ENCODE measurements at regions of chr10 and their contacts with region 1.

Region 1: DNA sequence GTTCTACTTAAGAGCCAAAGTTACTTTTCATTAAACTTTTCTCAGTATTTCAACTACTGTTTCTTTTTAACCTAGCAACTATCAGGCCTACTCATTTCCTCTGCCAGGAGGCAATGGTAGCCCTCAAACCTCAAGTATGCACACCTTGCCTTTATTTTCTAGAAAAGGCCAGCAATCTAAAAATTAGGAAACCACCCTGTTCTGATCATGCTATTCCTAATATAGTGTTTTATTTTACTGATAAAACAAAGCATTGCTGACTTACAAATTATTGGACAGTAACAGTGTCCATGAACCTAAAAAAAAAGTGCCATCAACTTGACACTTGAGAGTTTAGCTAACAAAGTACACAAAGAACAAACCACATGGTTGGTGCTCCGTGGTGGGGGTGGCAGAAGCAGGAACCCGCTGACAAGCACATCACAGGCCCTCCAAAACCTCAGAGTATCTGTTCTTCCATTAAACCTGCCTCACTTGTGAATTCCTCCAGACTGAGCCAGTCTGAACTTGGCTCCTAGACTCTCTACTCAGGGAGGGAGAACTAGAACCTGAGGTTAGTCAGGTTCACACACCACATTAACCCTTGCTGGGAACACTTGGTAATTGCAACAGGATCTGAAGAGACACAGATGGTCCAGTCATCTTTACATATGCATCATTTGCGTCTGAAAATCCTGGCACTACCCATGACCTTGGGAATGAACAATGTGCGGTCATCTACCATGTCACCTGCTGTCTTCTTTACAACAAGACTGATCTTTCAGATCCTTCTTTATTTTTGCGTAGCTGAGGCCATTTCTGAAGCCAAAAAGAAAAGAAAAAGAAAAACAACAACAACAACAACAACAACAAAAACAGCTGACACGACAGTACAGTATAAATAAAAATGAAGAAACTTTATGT is 31.9 kb downstream of the PIP4K2A start:
- DNase-seq: peak; percentile 78
- ATAC-seq: peak; percentile 50
- H3K4me3 Mint-ChIP-seq: peak overlapping the region; percentile 70
- H3K27ac Mint-ChIP-seq: peak overlapping the region; percentile 97
- H3K4me1 Mint-ChIP-seq: peaks cover 88% of the 10 kb centered on the region
- H3K27me3 Mint-ChIP-seq: no peaks in the 10 kb centered on the region

Region 2: DNA sequence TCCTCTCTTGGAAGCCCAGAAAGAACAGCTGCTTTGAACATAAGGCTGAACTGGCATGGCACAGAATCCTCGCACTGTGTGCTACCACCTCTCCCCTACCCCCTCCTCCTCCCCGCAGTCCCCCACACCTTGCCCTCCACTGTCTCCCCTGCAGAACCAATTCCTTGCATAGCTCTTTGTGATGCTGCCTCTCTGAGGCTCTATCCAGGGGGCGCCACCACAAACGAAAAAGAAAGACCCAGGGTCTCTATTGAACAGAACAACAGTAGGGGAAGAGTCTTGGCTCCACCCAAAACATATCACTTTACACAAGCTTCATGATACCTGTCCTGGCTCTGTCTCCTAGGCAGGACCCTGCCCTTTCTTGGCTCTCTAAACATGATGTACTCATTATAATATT is 438.5 kb before region 1 on chr10:
- CTCF ChIA-PET with region 1: no interaction called
- POLR2A ChIA-PET with region 1: no interaction called
- intact Hi-C with region 1: loop called in 1 of 2 experiments (anchors 1 kb)
- DNase-seq: peak; percentile 27
- ATAC-seq: no peak
- H3K4me3 Mint-ChIP-seq: no peak overlapping the region
- H3K27ac Mint-ChIP-seq: no peak overlapping the region
- H3K4me1 Mint-ChIP-seq: peaks cover 43% of the 10 kb centered on the region
- H3K27me3 Mint-ChIP-seq: peaks cover 3% of the 10 kb centered on the region

Region 3: GRCh38 chr10:22573820-22574569 is 108.5 kb before region 1 on chr10:
- CTCF ChIA-PET with region 1: no interaction called
- POLR2A ChIA-PET with region 1: no interaction called
- intact Hi-C with region 1: loop called in 1 of 2 experiments (anchors 1 kb)
- DNase-seq: peak; percentile 37
- ATAC-seq: no peak
- H3K4me3 Mint-ChIP-seq: no peak overlapping the region
- H3K27ac Mint-ChIP-seq: no peak overlapping the region
- H3K4me1 Mint-ChIP-seq: peaks cover 46% of the 10 kb centered on the region
- H3K27me3 Mint-ChIP-seq: no peaks in the 10 kb centered on the region

Region 4: GRCh38 chr10:22637491-22637890 is 45.0 kb before region 1 on chr10:
- CTCF ChIA-PET with region 1: no interaction called
- POLR2A ChIA-PET with region 1: no interaction called
- intact Hi-C with region 1: no loop called
- DNase-seq: no peak
- ATAC-seq: no peak
- H3K4me3 Mint-ChIP-seq: no peak overlapping the region
- H3K27ac Mint-ChIP-seq: peak overlapping the region; percentile 56
- H3K4me1 Mint-ChIP-seq: peaks cover 77% of the 10 kb centered on the region
- H3K27me3 Mint-ChIP-seq: no peaks in the 10 kb centered on the region

Region 5: GRCh38 chr10:22648547-22648961 is 33.9 kb before region 1 on chr10:
- CTCF ChIA-PET with region 1: no interaction called
- POLR2A ChIA-PET with region 1: interaction called, 4 read pairs
- intact Hi-C with region 1: loop called in 1 of 2 experiments (anchors 1 kb)
- DNase-seq: no peak
- ATAC-seq: peak; percentile 8
- H3K4me3 Mint-ChIP-seq: peak overlapping the region; percentile 49
- H3K27ac Mint-ChIP-seq: peak overlapping the region; percentile 93
- H3K4me1 Mint-ChIP-seq: peaks cover 90% of the 10 kb centered on the region
- H3K27me3 Mint-ChIP-seq: no peaks in the 10 kb centered on the region

Region 6: GRCh38 chr10:22666287-22667092 is 16.0 kb before region 1 on chr10:
- CTCF ChIA-PET with region 1: interaction called, 15 read pairs
- POLR2A ChIA-PET with region 1: no interaction called
- intact Hi-C with region 1: loop called (anchors 1 kb)
- DNase-seq: peak; percentile 68
- ATAC-seq: peak; percentile 77
- H3K4me3 Mint-ChIP-seq: peak overlapping the region; percentile 72
- H3K27ac Mint-ChIP-seq: peak overlapping the region; percentile 94
- H3K4me1 Mint-ChIP-seq: peaks cover 80% of the 10 kb centered on the region
- H3K27me3 Mint-ChIP-seq: no peaks in the 10 kb centered on the region

Region 7: GRCh38 chr10:22714479-22715289 is 32.2 kb after region 1 on chr10 and contains the start of gene PIP4K2A:
- CTCF ChIA-PET with region 1: interaction called, 5 read pairs
- POLR2A ChIA-PET with region 1: interaction called, 12 read pairs
- intact Hi-C with region 1: loop called (anchors 1 kb)
- DNase-seq: peak; percentile 86
- ATAC-seq: peak; percentile 86
- H3K4me3 Mint-ChIP-seq: peak within 1 kb of the TSS; percentile 86
- H3K27ac Mint-ChIP-seq: peak within 1 kb of the TSS; percentile 88
- H3K4me1 Mint-ChIP-seq: peaks cover 29% of the 10 kb centered on the region
- H3K27me3 Mint-ChIP-seq: no peaks in the 10 kb centered on the region
- total RNA-seq, gene PIP4K2A: 105 to 108 TPM

Region 8: DNA sequence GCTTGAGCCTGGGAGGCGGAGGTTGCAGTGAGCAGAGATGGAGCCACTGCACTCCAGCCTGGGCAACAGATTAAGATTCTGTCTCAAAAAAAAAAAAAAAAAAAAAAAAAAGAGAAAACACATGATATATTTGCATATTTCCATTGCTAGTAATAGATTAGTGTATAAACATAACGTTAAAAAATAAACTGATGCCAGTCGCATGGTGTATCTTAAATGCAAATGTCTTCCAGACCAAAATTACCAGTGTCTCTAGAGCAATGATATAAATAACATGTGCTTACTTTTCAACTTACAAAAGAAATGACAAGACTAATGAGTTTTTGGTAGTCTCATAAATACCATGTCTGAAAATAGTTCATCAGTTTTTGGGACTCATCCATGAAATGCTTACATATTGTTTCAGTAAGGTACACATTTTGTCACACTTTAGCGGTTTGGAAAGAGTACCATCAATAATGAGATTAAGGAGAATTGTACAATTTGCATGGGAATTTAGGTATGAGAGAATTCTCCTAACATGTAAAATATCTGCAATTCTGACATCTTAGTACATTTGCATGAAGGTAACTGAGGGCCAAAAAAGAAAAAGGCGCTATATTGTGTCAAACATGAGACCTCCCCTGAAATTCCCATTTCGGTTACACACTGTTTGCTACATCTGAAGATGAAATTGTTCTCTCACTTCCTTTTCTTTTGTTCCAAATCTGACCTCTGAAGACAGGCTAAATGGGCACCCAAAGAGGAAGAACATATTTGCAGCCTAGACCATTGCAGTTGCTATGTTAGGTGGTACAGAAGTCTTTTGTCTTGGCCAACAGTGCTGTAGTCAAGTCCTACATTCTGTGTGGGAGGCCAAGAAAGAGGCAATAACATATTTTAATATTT is 83.4 kb after region 1 on chr10:
- CTCF ChIA-PET with region 1: no interaction called
- POLR2A ChIA-PET with region 1: no interaction called
- intact Hi-C with region 1: no loop called
- DNase-seq: no peak
- ATAC-seq: no peak
- H3K4me3 Mint-ChIP-seq: no peak overlapping the region
- H3K27ac Mint-ChIP-seq: no peak overlapping the region
- H3K4me1 Mint-ChIP-seq: no peaks in the 10 kb centered on the region
- H3K27me3 Mint-ChIP-seq: no peaks in the 10 kb centered on the region

Region 9: GRCh38 chr10:23344241-23344841 is 661.9 kb after region 1 on chr10 and contains the start of gene C10orf67:
- CTCF ChIA-PET with region 1: no interaction called
- POLR2A ChIA-PET with region 1: no interaction called
- intact Hi-C with region 1: loop called in 1 of 2 experiments (anchors 5 kb)
- DNase-seq: peak; percentile 54
- ATAC-seq: peak; percentile 24
- H3K4me3 Mint-ChIP-seq: peak within 1 kb of the TSS; percentile 79
- H3K27ac Mint-ChIP-seq: peak within 1 kb of the TSS; percentile 75
- H3K4me1 Mint-ChIP-seq: peaks cover 47% of the 10 kb centered on the region
- H3K27me3 Mint-ChIP-seq: peaks cover 5% of the 10 kb centered on the region
- total RNA-seq, gene C10orf67: 0.16 to 0.41 TPM